PC-3 (cell line): ENCODE measurements at regions of chr6 and their contacts with region 1.

Region 1: GRCh38 chr6:125872259-125872921 is 81.6 kb downstream of the NCOA7 start:
- DNase-seq: peak; percentile 78
- ATAC-seq: peak; percentile 68
- H3K4me3 ChIP-seq: peak overlapping the region; percentile 23; the same call in 1 of the 2 replicates
- H3K27ac ChIP-seq: peak overlapping the region; percentile 68
- H3K4me1 ChIP-seq: peaks cover 40% of the 10 kb centered on the region
- H3K27me3 ChIP-seq: no peaks in the 10 kb centered on the region
- CTCF ChIP-seq: no peak

Region 2: DNA sequence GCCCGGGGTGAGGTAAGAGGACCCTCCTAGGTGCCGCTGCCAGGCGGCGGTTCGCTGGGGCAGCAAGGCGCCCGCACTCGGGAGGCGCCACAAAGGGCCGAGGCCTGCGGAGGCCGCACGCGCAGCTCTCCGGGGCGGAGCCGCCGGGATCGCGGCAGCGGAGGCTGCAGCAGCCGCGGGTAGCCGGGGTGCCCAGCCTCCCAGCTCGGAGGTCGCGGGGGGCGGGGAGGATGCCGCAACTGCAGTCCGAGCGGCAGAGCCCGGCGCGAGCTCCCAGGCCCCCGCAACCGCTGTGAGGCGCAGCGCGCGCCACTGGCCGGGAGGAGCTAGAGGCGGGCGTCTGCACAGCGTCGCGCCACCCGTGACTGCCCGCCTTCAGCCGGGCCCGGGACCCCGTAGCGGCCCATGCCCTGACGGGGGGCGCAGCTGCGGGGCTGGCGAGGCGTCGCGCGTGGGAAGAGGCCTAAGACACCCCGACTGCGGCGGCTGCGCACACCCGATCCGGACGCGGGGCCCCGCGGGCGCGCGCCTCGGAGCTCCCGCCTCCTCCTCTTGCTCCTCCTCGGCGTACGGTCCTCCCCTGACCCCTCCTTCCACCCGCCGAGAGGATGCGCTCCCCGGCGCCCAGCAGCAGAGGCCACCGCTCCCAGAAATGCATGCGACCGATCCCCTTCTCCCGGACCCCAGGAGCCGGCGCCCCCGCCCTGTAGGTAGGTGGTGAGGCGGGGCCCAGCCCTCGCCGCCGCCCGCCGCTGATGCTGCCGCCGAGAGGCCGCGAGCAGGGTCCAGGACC is 81.8 kb before region 1 on chr6 and contains the start of gene NCOA7:
- CTCF ChIA-PET with region 1: interaction called, 22 read pairs
- POLR2A ChIA-PET with region 1: no interaction called
- intact Hi-C with region 1: loop called (anchors 5 kb)
- DNase-seq: peak; percentile 58
- ATAC-seq: peak; percentile 80
- H3K4me3 ChIP-seq: peak within 1 kb of the TSS; percentile 91
- H3K27ac ChIP-seq: 0 out of 2 replicates have a peak within 1 kb of the TSS, but pooled peaks have one; percentile 7
- H3K4me1 ChIP-seq: peaks cover 45% of the 10 kb centered on the region
- H3K27me3 ChIP-seq: no peaks in the 10 kb centered on the region
- CTCF ChIP-seq: no peak
- total RNA-seq, gene NCOA7: 12.1 and 13.4 TPM in 2 replicates

Region 3: GRCh38 chr6:125918681-125919566 is 46.5 kb after region 1 on chr6:
- CTCF ChIA-PET with region 1: no interaction called
- POLR2A ChIA-PET with region 1: no interaction called
- intact Hi-C with region 1: loop called (anchors 2 kb)
- DNase-seq: peak; percentile 79
- ATAC-seq: peak; percentile 77
- H3K4me3 ChIP-seq: peak overlapping the region; percentile 68
- H3K27ac ChIP-seq: peak overlapping the region; percentile 90
- H3K4me1 ChIP-seq: peaks cover 54% of the 10 kb centered on the region
- H3K27me3 ChIP-seq: no peaks in the 10 kb centered on the region
- CTCF ChIP-seq: no peak